GM12878 (cell line): ENCODE measurements at regions of chr19 and their contacts with region 1.

Region 1: GRCh38 chr19:47707135-47707925 is 5.9 kb upstream of the EHD2 start:
- DNase-seq: peak; percentile 21
- ATAC-seq: peak; percentile 100
- H3K4me3 ChIP-seq: no peak overlapping the region
- H3K27ac ChIP-seq: no peak overlapping the region
- H3K4me1 ChIP-seq: no peaks in the 10 kb centered on the region
- H3K27me3 ChIP-seq: no peaks in the 10 kb centered on the region
- CTCF ChIP-seq: peak; percentile 87 to 93 (median 91)
- EP300 ChIP-seq: no peak
- POLR2A ChIP-seq: no peak
- RAD21 ChIP-seq: peak; percentile 85

Region 2: DNA sequence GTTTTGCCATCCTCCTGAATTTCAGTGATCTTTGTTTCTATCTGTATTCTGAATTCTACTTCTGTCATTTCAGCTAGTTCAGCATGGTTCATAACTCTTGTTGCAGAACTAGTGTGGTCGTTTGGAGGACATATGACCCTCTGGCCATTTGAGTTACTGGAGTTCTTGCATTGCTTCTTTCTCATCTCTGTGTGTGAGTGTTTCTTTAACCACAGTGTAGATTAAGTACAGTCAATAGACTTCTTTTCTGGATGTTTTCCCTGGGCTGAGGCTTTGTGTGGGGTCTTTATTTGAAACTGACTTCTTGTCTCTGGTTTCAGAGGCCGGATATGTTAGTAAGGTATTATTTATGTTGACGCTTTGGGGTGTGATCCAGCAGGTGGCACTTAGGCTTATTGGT is 1544.6 kb before region 1 on chr19:
- CTCF ChIA-PET with region 1: no interaction called
- POLR2A ChIA-PET with region 1: no interaction called
- RAD21 ChIA-PET with region 1: no interaction called
- SMC1A ChIA-PET with region 1: no interaction called
- in situ Hi-C with region 1: no loop called
- intact Hi-C with region 1: no loop called
- DNase-seq: no peak
- ATAC-seq: no peak
- H3K4me3 ChIP-seq: no peak overlapping the region
- H3K27ac ChIP-seq: no peak overlapping the region
- H3K4me1 ChIP-seq: no peaks in the 10 kb centered on the region
- H3K27me3 ChIP-seq: no peaks in the 10 kb centered on the region; a peak in 1 of 4 replicates
- CTCF ChIP-seq: no peak
- EP300 ChIP-seq: no peak
- POLR2A ChIP-seq: no peak
- RAD21 ChIP-seq: no peak

Region 3: DNA sequence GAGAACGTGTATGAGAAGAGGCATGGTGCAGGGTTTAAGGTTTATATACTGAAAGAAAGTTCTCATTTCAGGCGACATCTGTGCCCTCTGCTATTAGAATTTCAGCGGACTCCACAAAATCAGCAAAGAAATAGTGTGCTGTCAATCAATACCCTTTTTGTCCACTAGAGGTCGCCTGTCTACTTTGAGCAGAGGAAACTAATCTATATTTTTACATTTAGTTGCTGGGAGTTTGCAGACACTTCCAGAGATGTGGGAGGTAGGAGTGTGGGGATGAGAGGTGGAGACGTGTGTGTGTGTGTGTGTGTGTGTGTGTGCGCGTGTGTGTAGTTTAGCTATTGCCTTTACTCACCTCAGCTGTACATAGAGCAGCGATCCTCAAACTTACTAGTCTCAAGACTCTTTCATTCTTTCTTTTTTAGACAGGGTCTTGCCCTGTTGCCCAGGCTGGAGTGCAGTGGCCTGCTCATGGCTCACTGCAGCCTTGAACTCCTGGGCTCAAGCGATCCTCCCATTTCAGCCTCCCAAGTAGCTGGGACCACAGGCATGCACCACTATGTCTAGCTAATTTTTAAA is 422.9 kb before region 1 on chr19:
- CTCF ChIA-PET with region 1: interaction called, 4 read pairs
- POLR2A ChIA-PET with region 1: no interaction called
- RAD21 ChIA-PET with region 1: no interaction called
- SMC1A ChIA-PET with region 1: no interaction called
- in situ Hi-C with region 1: no loop called
- intact Hi-C with region 1: loop called (anchors 10 kb)
- DNase-seq: no peak
- ATAC-seq: peak; percentile 46
- H3K4me3 ChIP-seq: no peak overlapping the region
- H3K27ac ChIP-seq: no peak overlapping the region
- H3K4me1 ChIP-seq: peaks cover 15% of the 10 kb centered on the region
- H3K27me3 ChIP-seq: no peaks in the 10 kb centered on the region
- CTCF ChIP-seq: peak; percentile 73 to 85 (median 79)
- EP300 ChIP-seq: no peak
- POLR2A ChIP-seq: no peak
- RAD21 ChIP-seq: peak; percentile 58

Region 4: DNA sequence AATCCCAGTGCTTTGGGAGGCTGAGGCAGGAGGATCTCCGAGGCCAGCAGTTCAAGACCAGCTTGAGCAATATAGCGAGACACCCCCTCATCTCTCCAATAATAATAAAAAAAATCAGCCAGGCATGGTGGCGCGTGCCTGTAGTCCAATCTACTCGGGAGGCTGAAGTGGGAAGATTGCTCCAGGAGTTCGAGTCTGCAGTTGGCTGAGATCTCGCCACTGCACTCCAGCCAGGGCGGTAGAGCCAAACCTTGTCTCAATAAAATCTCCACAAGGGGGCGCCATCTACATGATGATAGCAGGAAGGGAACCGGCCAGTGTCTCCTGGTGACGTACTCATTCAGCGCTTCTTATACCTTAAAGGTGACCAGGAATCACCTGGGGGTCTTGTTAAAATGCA is 411.3 kb before region 1 on chr19:
- CTCF ChIA-PET with region 1: interaction called, 15 read pairs
- POLR2A ChIA-PET with region 1: no interaction called
- RAD21 ChIA-PET with region 1: interaction called, 5 read pairs
- SMC1A ChIA-PET with region 1: interaction called, 3 read pairs
- in situ Hi-C with region 1: no loop called
- intact Hi-C with region 1: no loop called
- DNase-seq: no peak
- ATAC-seq: peak; percentile 94
- H3K4me3 ChIP-seq: no peak overlapping the region
- H3K27ac ChIP-seq: no peak overlapping the region
- H3K4me1 ChIP-seq: peaks cover 12% of the 10 kb centered on the region
- H3K27me3 ChIP-seq: no peaks in the 10 kb centered on the region
- CTCF ChIP-seq: peak; percentile 66 to 86 (median 69)
- EP300 ChIP-seq: no peak
- POLR2A ChIP-seq: no peak
- RAD21 ChIP-seq: peak; percentile 89

Region 5: DNA sequence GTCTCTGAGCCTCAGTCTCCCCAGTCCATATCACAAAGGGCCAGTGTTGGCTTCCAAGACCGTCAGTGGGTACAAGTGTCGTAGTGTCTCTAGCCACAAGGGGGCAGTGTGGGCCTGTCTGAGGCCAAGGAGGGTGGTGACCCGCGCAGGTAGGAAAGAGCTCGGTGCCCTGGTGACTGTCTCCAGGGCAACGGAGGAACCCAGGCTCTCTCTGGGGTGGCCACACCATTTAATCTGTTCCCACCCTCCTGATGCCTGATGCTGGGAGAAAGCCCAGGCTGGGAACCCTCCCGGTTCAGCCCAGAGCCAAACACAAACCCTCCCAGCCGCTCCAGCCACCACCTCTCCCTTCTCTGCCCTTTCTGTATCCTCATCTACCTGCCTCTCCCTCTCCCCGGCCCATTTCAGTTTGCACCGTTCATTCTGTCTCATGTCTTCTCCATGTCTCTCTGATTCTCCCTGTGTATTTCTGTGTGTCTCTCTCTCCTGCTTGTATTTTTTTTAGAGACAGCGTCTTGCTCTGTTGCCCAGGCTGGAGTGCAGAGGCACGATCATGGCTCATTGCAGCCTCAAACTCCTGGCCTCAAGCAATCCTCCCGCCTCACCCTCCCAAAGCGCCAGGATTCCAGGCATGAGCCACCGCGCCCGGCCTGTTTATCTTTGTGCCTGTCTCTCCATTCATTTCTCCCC is 270.5 kb before region 1 on chr19:
- CTCF ChIA-PET with region 1: interaction called, 163 read pairs
- POLR2A ChIA-PET with region 1: no interaction called
- RAD21 ChIA-PET with region 1: interaction called, 47 read pairs
- SMC1A ChIA-PET with region 1: interaction called, 49 read pairs
- in situ Hi-C with region 1: loop called (anchors 5 kb)
- intact Hi-C with region 1: loop called (anchors 1 kb)
- DNase-seq: no peak
- ATAC-seq: peak; percentile 96
- H3K4me3 ChIP-seq: no peak overlapping the region
- H3K27ac ChIP-seq: no peak overlapping the region
- H3K4me1 ChIP-seq: no peaks in the 10 kb centered on the region; the same call in none of the 2 replicates
- H3K27me3 ChIP-seq: no peaks in the 10 kb centered on the region; a peak in 2 of 4 replicates
- CTCF ChIP-seq: peak; percentile 77 to 88 (median 85)
- EP300 ChIP-seq: no peak
- POLR2A ChIP-seq: no peak
- RAD21 ChIP-seq: peak; percentile 95

Region 6: GRCh38 chr19:47658431-47659348 is 48.6 kb before region 1 on chr19:
- CTCF ChIA-PET with region 1: no interaction called
- POLR2A ChIA-PET with region 1: no interaction called
- RAD21 ChIA-PET with region 1: no interaction called
- SMC1A ChIA-PET with region 1: no interaction called
- in situ Hi-C with region 1: no loop called
- intact Hi-C with region 1: no loop called
- DNase-seq: no peak
- ATAC-seq: no peak
- H3K4me3 ChIP-seq: no peak overlapping the region
- H3K27ac ChIP-seq: no peak overlapping the region
- H3K4me1 ChIP-seq: no peaks in the 10 kb centered on the region
- H3K27me3 ChIP-seq: no peaks in the 10 kb centered on the region
- CTCF ChIP-seq: no peak
- EP300 ChIP-seq: no peak
- POLR2A ChIP-seq: no peak
- RAD21 ChIP-seq: no peak

Region 7: DNA sequence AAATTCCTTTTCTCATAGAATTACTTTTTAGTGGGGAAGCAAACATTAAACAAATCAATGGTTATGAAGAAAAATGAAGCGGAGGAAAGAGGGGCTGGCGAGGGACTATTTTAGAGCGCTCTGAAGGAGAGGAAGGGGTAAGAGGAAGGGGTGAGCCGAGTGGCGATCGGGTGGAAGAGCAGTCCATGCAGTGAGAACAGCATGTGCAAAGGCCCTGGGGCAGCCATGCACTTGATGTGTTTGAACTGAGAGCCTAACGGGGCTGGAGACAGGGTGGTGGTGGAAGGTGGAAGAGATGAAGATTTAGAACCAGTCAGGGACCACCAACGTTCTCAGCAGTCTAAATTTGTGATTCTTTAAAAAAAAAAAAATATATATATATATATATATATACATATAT is 23.6 kb after region 1 on chr19:
- CTCF ChIA-PET with region 1: no interaction called
- POLR2A ChIA-PET with region 1: no interaction called
- RAD21 ChIA-PET with region 1: no interaction called
- SMC1A ChIA-PET with region 1: no interaction called
- in situ Hi-C with region 1: no loop called
- intact Hi-C with region 1: no loop called
- DNase-seq: no peak
- ATAC-seq: no peak
- H3K4me3 ChIP-seq: no peak overlapping the region
- H3K27ac ChIP-seq: no peak overlapping the region
- H3K4me1 ChIP-seq: no peaks in the 10 kb centered on the region
- H3K27me3 ChIP-seq: 0 out of 4 replicates have a peak, but pooled peaks cover 0 to 2% of the 10 kb centered on the region in 2 experiments
- CTCF ChIP-seq: no peak
- EP300 ChIP-seq: no peak
- POLR2A ChIP-seq: no peak
- RAD21 ChIP-seq: no peak

Region 8: GRCh38 chr19:47790398-47790814 is 83.1 kb after region 1 on chr19:
- CTCF ChIA-PET with region 1: interaction called, 24 read pairs
- POLR2A ChIA-PET with region 1: no interaction called
- RAD21 ChIA-PET with region 1: interaction called, 3 read pairs
- SMC1A ChIA-PET with region 1: interaction called, 3 read pairs
- in situ Hi-C with region 1: no loop called
- intact Hi-C with region 1: loop called (anchors 2 kb)
- DNase-seq: no peak
- ATAC-seq: peak; percentile 88
- H3K4me3 ChIP-seq: no peak overlapping the region
- H3K27ac ChIP-seq: no peak overlapping the region
- H3K4me1 ChIP-seq: no peaks in the 10 kb centered on the region
- H3K27me3 ChIP-seq: no peaks in the 10 kb centered on the region
- CTCF ChIP-seq: peak; percentile 56 to 93 (median 87)
- EP300 ChIP-seq: no peak
- POLR2A ChIP-seq: no peak
- RAD21 ChIP-seq: no peak

Region 9: GRCh38 chr19:47848823-47849473 is 141.6 kb after region 1 on chr19:
- CTCF ChIA-PET with region 1: no interaction called
- POLR2A ChIA-PET with region 1: no interaction called
- RAD21 ChIA-PET with region 1: no interaction called
- SMC1A ChIA-PET with region 1: no interaction called
- in situ Hi-C with region 1: no loop called
- intact Hi-C with region 1: no loop called
- DNase-seq: no peak
- ATAC-seq: no peak
- H3K4me3 ChIP-seq: no peak overlapping the region
- H3K27ac ChIP-seq: no peak overlapping the region
- H3K4me1 ChIP-seq: no peaks in the 10 kb centered on the region
- H3K27me3 ChIP-seq: no peaks in the 10 kb centered on the region
- CTCF ChIP-seq: peak in 2 of 3 experiments; percentile 20 to 31; a peak in 1 of 6 replicates
- EP300 ChIP-seq: no peak
- POLR2A ChIP-seq: no peak
- RAD21 ChIP-seq: no peak